Left lung (tissue), 14 donors: ENCODE measurements at regions of chr9 and their contacts with region 1.

Region 1: DNA sequence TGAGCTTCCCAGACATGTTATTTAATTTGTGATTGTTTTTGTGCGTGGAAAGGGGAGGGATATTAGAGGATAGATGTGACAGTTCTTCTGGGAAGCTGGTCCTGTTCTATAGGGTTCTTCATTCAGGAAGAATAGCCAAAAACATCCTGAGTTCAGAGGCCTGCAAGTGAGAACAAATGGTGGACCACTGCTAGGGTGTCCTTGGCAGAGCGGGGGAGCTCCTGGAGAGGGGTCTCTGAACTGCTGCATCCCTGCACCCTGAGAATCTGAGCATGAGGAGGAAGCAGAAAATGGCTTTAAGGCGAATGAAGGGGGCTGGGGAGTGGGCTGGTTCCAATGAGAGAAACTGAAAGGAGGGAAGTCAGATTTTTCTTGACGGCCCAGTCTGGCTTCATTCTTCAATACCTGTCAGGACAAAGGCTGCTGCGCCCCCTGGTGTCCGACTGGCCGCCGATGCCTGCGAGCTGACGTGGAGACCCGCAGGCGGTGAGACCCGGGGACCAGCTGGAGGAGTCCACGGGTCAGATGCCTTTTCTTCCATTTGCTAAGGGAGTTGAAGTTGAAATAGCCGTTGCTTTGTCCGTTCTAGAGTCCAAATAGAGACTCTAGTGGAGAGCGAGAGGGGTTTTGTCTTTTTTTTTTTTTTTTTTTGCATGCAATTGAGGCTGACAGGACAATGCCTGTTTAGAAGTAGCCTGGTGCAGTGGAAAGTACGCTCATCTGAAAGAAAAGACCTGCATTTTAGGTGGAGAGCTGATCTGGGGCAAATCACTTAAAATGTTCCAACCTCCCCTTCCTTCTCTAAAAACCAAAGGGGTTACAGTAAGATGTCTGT is 39.5 kb upstream of the NFIB start:
- DNase-seq: peak; percentile 87 to 96 (median 92)
- ATAC-seq: peak; percentile 89
- H3K4me3 ChIP-seq: no peak overlapping the region
- H3K27ac ChIP-seq: peak overlapping the region; percentile 33 to 77
- H3K4me1 ChIP-seq: peaks cover 10 to 26% of the 10 kb centered on the region in 2 donors
- H3K27me3 ChIP-seq: peaks cover 13 to 37% of the 10 kb centered on the region in 2 donors
- CTCF ChIP-seq: peak; percentile 76 to 87

Region 2: DNA sequence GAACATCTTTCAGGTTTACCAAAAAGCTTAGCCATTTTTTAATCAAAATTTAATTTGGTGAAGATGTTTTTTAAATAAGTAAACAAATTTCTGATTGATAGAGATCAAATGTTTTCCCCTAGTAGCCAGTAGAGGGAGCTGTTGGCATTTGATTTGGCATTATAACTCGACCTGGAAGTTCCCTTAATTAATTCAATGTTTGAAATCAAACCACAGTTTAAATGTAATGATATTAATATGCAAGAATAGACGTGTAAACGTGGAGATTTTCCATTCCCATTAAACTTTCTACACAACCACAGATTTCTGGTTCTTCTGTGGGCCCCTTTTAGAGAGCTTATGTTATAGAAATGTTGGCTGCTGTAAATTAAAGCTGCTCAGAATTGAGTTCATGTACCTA is 925.9 kb before region 1 on chr9:
- intact Hi-C with region 1: loop called in 1 of 2 experiments (anchors 10 kb)
- DNase-seq: peak in 2 of 4 donors; percentile 71 to 77
- ATAC-seq: peak; percentile 52
- H3K4me3 ChIP-seq: no peak overlapping the region
- H3K27ac ChIP-seq: no peak overlapping the region
- H3K4me1 ChIP-seq: no peaks in the 10 kb centered on the region
- H3K27me3 ChIP-seq: no peaks in the 10 kb centered on the region
- CTCF ChIP-seq: peak; percentile 57 to 72